Activated T-helper 2 cell treated with anti-CD3 and anti-CD28 coated beads, Interferon-gamma antibody, Interleukin-2, Interleukin-4, amounts not matched to agents 10 μg/mL and 5 μg/mL and 100 μg/mL, durations not matched to agents 14 hours and 24 hours and 36 hours (primary cell): ENCODE measurements at regions of chr12 and their contacts with region 1.

Region 1: GRCh38 chr12:89494411-89495231 is 30.0 kb downstream of the GALNT4 start:
- DNase-seq: no peak
- H3K4me3 Mint-ChIP-seq: peak overlapping the region; percentile 9
- H3K27ac Mint-ChIP-seq: peak overlapping the region; percentile 90
- H3K4me1 Mint-ChIP-seq: peaks cover 17% of the 10 kb centered on the region
- H3K27me3 Mint-ChIP-seq: no peaks in the 10 kb centered on the region

Region 2: DNA sequence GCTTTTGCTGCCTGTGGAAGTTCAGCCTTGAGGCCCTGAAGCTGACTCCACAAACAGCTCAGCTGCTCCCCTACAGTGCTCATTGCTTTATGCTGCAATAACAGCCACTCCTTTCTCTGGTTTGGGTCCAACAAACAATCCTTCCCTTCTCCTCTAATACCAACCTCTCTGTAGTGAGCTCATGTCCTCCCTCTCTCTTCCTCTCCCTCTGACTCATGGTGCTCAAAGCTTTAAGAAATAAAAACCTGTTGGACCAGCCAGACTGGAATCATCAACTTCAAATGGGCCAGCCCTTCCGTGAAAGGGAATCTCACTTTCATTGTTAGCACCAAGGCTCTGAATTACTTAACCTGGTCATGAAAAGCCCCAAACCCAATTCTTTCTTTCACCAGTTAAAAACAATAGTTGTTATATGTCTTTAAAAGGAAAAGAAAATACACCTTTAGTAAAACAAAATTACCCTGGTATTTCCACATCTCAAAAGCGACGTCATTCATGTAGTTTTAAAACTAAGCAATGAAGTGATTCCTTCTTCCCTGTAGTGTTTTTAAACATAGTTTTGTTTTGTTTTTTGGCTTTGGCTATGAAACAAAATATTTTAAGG is 268.7 kb before region 1 on chr12:
- intact Hi-C with region 1: no loop called
- DNase-seq: no peak
- H3K4me3 Mint-ChIP-seq: peak overlapping the region; percentile 70
- H3K27ac Mint-ChIP-seq: peak overlapping the region; percentile 100
- H3K4me1 Mint-ChIP-seq: peaks cover 67% of the 10 kb centered on the region
- H3K27me3 Mint-ChIP-seq: no peaks in the 10 kb centered on the region

Region 3: DNA sequence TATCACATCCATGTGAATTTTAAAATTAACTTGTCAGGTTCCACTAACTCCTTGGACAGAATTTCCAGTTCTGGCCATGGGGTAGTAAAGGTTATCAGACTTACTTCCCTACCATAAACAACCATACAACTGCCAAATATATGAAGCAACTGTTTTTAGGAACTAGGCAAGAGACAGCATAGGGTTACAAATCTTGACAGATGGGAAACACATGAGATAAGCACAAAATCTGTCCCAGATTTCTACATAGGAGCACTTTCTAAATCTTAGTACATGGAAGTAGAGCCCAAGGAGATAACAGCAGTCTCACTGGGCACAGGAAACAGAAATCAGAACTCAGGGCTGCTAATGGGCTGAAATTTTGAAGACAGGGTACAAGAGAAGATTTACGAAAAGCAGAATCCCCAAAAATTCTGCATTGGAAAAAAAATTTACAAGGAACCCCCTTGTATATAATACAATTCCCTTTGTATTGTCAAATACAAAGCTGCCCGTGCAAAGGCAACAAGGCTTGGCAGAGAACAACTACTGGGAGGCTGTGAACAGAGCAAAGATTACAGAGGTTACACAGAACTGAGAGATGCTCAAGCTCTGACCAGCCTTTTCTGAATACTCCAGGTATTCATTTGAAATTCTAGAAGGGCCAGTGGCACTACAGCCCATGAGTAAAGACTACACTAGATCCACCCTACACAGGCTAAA is 13.3 kb before region 1 on chr12:
- intact Hi-C with region 1: no loop called
- DNase-seq: no peak
- H3K4me3 Mint-ChIP-seq: no peak overlapping the region
- H3K27ac Mint-ChIP-seq: no peak overlapping the region
- H3K4me1 Mint-ChIP-seq: peaks cover 9% of the 10 kb centered on the region
- H3K27me3 Mint-ChIP-seq: no peaks in the 10 kb centered on the region

Region 4: DNA sequence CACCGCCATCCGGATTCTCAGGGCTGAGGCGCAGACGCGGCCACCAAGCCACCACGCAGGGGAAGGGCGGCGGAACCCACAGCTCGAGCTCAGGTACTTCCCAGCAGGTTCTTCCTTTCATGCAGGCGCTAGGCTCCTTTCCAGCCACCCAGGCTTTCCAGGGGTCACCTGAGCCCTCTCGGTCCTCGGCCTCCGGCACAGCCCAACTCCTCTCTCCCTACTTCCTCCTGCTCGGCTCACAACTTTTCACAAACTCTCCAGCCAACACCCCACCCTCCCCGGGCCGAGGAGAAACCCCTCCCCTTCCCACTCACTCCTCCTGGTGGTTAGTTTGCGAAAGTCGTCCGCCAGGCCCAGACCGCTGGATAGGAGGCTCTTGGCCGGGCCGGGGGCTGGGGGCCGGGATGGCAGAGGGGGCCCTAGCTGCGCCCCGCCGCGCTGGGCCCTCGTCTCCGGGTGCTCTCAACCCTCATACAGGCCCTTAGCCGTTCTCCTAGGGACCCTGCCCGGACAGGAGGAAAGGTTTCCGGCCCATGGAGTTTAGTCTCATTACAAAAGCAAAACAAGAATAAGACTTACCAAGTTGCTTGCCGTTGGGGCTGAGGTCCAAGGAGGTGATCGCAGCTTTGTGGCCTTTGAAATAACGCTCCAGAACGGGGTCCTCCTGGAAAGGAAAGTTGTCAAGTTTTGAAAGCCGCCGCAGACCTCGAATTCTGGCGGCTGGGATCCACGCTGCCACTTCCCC is 30.1 kb after region 1 on chr12 and contains the start of gene GALNT4:
- intact Hi-C with region 1: loop called (anchors 1 kb)
- DNase-seq: peak; percentile 75
- H3K4me3 Mint-ChIP-seq: peak within 1 kb of the TSS; percentile 99
- H3K27ac Mint-ChIP-seq: peak within 1 kb of the TSS; percentile 99
- H3K4me1 Mint-ChIP-seq: peaks cover 51% of the 10 kb centered on the region
- H3K27me3 Mint-ChIP-seq: no peaks in the 10 kb centered on the region
- total RNA-seq, gene GALNT4: 8.8 and 9.1 TPM in 2 replicates

Region 5: GRCh38 chr12:90280564-90281058 is 786.0 kb after region 1 on chr12:
- intact Hi-C with region 1: no loop called
- DNase-seq: no peak
- H3K4me3 Mint-ChIP-seq: no peak overlapping the region
- H3K27ac Mint-ChIP-seq: no peak overlapping the region
- H3K4me1 Mint-ChIP-seq: peaks cover 11% of the 10 kb centered on the region
- H3K27me3 Mint-ChIP-seq: no peaks in the 10 kb centered on the region

Region 6: GRCh38 chr12:90333939-90334338 is 839.3 kb after region 1 on chr12:
- intact Hi-C with region 1: no loop called
- DNase-seq: no peak
- H3K4me3 Mint-ChIP-seq: no peak overlapping the region
- H3K27ac Mint-ChIP-seq: no peak overlapping the region
- H3K4me1 Mint-ChIP-seq: no peaks in the 10 kb centered on the region
- H3K27me3 Mint-ChIP-seq: no peaks in the 10 kb centered on the region